ENCODE measurements at regions of chr3 and their contacts with region 1.

Region 1: DNA sequence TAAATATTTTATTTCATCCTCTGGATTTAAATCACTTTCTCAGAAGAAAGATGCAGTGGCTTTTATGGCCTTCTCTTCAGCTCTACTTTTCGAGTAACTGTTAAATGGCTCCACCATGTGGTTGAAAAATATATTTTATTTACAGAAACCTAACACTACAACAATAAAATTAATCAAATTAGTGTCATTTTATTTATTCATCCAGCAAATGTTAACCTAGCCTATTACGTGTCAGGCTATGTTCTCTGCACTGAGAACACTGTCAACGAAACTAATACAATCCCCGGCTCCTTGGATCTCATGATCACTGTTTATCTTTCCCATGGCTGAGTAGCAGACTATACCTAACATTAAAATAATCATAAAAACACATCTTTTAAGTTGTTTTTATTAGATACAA is 148.0 kb upstream of the OSTN start:
- DNase-seq: no peak
- H3K4me3 ChIP-seq: no peak overlapping the region
- H3K27ac ChIP-seq: no peak overlapping the region
- H3K4me1 ChIP-seq: no peaks in the 10 kb centered on the region
- H3K27me3 ChIP-seq: no peaks in the 10 kb centered on the region
- CTCF ChIP-seq: peak; percentile 20

Region 2: GRCh38 chr3:190183121-190183520 is 867.9 kb before region 1 on chr3:
- intact Hi-C with region 1: no loop called
- DNase-seq: no peak
- H3K4me3 ChIP-seq: no peak overlapping the region
- H3K27ac ChIP-seq: no peak overlapping the region
- H3K4me1 ChIP-seq: no peaks in the 10 kb centered on the region
- H3K27me3 ChIP-seq: no peaks in the 10 kb centered on the region
- CTCF ChIP-seq: no peak

Region 3: DNA sequence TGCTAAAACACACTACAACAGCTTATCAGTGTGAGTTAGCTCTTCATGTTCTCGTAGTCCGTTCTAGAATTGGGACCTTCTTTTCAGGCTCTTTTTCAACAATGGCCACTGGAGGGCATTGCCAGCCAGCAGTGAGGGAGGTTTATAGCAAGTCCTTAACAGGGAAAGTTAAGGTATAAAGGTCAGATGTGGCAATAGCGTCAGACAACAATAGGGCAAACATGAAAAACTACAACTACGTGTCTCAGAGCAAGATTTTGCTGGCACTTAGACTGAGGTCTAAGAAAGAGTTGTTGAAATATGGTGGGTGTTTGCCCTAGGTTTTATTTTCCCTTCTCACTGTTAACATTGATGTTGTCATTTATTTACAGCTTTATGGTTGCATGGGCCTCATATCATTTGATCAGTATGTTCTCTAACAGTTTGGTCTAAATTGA is 349.9 kb before region 1 on chr3:
- intact Hi-C with region 1: loop called (anchors 5 kb)
- DNase-seq: peak; percentile 61
- H3K4me3 ChIP-seq: no peak overlapping the region
- H3K27ac ChIP-seq: no peak overlapping the region
- H3K4me1 ChIP-seq: no peaks in the 10 kb centered on the region
- H3K27me3 ChIP-seq: no peaks in the 10 kb centered on the region
- CTCF ChIP-seq: peak; percentile 21

Region 4: GRCh38 chr3:190883973-190884832 is 166.8 kb before region 1 on chr3:
- intact Hi-C with region 1: loop called (anchors 5 kb)
- DNase-seq: peak; percentile 47
- H3K4me3 ChIP-seq: no peak overlapping the region
- H3K27ac ChIP-seq: no peak overlapping the region
- H3K4me1 ChIP-seq: no peaks in the 10 kb centered on the region
- H3K27me3 ChIP-seq: no peaks in the 10 kb centered on the region
- CTCF ChIP-seq: peak; percentile 86

Region 5: DNA sequence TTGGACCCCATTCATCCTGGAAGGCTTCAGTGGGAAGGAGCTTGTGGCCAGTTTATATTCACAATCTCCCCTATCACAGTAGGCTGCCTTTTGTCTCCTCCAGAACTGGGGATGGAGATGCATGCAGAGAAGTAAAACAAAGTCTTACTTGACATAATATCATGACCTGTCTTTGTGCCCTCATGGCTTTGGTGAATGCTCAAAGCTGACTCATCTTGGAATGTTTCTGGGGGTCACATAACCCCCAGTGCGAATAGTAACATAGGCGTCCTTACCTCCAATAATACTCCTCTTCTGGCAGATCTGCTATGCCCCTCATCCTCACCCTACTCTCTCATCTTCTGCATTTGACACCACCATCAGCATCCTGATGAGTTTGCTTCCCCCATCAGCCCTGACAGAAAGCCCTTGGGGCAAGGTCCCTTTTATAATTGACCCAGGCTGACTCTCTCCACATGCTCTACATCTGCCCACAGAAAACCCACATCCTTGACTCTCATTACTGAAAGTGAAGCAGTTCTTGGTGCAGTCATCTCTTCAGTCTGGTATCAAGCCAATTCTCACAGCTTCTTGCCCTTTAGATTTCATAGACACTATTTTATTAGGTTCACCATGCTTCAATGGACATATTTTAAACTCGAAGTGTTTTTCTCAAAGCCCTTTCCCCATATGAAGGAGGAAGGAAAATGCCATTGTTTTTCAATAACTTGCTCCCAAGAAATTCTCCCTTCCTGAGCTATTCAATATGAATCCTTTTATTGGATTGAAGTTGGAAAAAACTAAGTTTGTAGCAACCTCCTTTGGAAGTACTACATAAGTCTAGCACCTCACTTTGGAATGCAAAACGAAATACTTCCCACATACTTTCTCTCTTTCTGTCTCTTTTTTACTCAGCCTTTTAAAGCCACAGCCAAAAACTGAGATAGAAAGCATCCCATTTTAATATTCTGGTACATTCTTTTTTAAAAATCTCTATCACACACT is 184.6 kb after region 1 on chr3:
- intact Hi-C with region 1: no loop called
- DNase-seq: no peak
- H3K4me3 ChIP-seq: no peak overlapping the region
- H3K27ac ChIP-seq: no peak overlapping the region
- H3K4me1 ChIP-seq: no peaks in the 10 kb centered on the region
- H3K27me3 ChIP-seq: no peaks in the 10 kb centered on the region
- CTCF ChIP-seq: no peak

Measured in colonic mucosa (tissue), 4 donors.